ENCODE measurements at regions of chr5 and their contacts with region 1.

Region 1: DNA sequence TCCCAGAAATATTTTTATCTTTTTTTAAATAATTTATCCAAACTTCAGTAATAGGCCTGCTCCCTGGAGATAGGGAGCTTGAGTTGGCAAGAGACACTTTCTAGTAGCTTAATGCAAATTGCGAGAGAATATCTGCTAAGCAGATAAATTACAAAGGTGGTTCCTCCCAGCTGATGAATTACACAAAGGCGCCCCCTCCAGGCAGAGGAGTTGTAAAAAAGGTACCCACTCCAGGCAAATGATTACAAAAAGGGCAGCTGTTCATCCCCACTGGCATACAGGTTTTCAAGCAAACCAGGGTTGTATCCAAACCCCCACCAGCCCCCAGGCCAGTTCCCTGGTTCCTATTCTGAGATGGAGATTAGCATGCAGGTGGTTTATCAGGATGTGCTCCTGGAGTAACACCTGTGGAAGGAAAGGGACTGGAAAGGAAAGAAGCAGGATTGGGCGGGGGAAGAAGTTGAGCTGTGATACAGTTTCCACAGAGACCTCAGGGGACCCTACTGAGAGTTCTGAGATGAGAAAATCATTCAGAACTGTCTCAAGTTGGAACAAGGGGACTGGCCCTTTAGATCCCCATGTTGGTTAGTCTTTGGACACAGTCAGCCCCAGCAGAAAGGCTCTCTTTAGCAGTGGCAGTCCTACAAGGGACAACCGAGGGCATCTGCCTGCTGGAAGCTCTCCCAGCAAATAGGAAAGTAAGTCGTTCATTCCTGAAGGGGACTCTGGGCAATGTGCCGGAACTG is 25.5 kb downstream of the ESM1 start:
- DNase-seq: peak; percentile 71
- ATAC-seq: peak; percentile 79
- H3K4me3 Mint-ChIP-seq: no peak overlapping the region
- H3K27ac Mint-ChIP-seq: no peak overlapping the region
- H3K4me1 Mint-ChIP-seq: no peaks in the 10 kb centered on the region
- H3K27me3 Mint-ChIP-seq: peaks cover 15% of the 10 kb centered on the region
- CTCF ChIP-seq: peak; percentile 33

Region 2: GRCh38 chr5:54905943-54906537 is 53.8 kb before region 1 on chr5:
- CTCF ChIA-PET with region 1: interaction called, 75 read pairs
- POLR2A ChIA-PET with region 1: no interaction called
- DNase-seq: peak; percentile 79
- ATAC-seq: peak; percentile 53
- H3K4me3 Mint-ChIP-seq: no peak overlapping the region
- H3K27ac Mint-ChIP-seq: no peak overlapping the region
- H3K4me1 Mint-ChIP-seq: no peaks in the 10 kb centered on the region; the same call in none of the 2 replicates
- H3K27me3 Mint-ChIP-seq: no peaks in the 10 kb centered on the region
- CTCF ChIP-seq: peak; percentile 42; the same call in 1 of the 2 replicates

Region 3: GRCh38 chr5:54969856-54970828 is 10.3 kb after region 1 on chr5:
- CTCF ChIA-PET with region 1: interaction called, 23 read pairs
- POLR2A ChIA-PET with region 1: no interaction called
- DNase-seq: no peak
- ATAC-seq: no peak
- H3K4me3 Mint-ChIP-seq: no peak overlapping the region
- H3K27ac Mint-ChIP-seq: no peak overlapping the region
- H3K4me1 Mint-ChIP-seq: peaks cover 6% of the 10 kb centered on the region
- H3K27me3 Mint-ChIP-seq: no peaks in the 10 kb centered on the region
- CTCF ChIP-seq: no peak

Region 4: DNA sequence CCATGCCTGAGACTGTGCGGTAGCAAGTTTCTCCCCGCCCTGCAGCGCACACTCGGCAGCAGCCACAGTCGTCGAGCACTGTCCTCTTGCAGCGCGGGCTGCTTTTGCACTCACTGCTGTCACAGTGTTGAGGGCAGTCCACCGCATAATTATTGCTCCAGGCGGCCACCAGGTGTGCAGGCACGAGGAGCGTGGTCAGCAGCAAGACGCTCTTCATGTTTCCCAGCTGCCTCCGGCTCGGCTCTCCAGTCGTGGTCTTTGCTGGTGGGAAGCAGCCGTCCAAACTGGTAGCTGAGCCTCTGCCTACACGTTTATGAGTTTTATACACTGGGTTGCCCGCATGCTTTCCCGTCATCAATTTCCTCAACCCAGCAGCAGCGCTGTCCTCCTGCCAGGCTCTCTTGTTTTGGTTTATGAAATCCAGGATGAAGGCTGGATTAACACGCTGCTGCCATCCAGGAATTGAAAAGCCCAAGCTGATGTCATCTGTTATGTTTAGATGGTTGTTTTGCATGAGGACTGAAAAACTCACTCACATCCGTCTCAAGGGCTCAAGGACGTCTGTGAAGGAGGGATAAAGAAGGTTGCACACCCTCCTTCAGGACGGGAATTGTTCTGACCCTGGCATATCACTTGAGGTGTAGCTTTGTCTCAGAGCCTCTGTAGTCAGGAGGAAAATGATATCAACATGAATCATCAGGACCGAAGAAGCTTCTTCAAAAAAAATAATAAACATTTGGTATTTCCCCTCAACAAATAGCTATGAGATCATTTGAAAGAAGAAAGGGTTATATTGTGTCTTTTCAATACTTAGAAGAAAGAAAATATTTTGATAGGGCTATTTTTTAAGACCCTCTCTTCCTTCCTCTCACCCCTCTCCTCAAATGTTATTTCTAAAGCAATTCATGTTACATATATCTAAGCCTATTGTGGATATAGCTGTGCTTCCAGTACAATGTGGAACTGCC is 25.7 kb after region 1 on chr5 and contains the start of gene ESM1:
- CTCF ChIA-PET with region 1: interaction called, 17 read pairs
- POLR2A ChIA-PET with region 1: no interaction called
- DNase-seq: peak; percentile 18
- ATAC-seq: peak; percentile 62
- H3K4me3 Mint-ChIP-seq: no peak within 1 kb of the TSS
- H3K27ac Mint-ChIP-seq: no peak within 1 kb of the TSS
- H3K4me1 Mint-ChIP-seq: peaks cover 54% of the 10 kb centered on the region
- H3K27me3 Mint-ChIP-seq: peaks cover 71% of the 10 kb centered on the region
- CTCF ChIP-seq: no peak
- total RNA-seq, gene ESM1: not detected in 3 replicates

Region 5: DNA sequence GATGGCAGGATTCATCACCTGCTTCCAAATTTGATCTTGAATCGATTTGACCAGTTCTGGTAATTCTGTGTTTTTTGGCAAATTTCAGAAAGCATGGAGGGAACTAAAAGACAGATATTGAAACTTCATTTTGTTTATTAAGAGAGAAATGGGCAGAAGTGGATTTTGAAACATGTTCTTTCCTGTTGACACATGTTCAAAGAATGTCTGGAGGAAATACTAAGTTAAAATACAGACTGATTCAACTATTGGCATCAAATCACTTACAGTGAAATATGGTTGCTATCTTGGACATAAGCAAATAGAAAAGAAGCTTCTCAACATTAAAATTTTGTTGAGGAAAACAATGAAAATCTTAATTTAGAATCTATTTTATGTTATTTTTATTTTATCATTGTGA is 44.9 kb after region 1 on chr5:
- CTCF ChIA-PET with region 1: no interaction called
- POLR2A ChIA-PET with region 1: no interaction called
- DNase-seq: no peak
- ATAC-seq: no peak
- H3K4me3 Mint-ChIP-seq: no peak overlapping the region
- H3K27ac Mint-ChIP-seq: no peak overlapping the region
- H3K4me1 Mint-ChIP-seq: no peaks in the 10 kb centered on the region
- H3K27me3 Mint-ChIP-seq: peaks cover 4% of the 10 kb centered on the region; the same call in 1 of the 2 replicates
- CTCF ChIP-seq: no peak

Region 6: DNA sequence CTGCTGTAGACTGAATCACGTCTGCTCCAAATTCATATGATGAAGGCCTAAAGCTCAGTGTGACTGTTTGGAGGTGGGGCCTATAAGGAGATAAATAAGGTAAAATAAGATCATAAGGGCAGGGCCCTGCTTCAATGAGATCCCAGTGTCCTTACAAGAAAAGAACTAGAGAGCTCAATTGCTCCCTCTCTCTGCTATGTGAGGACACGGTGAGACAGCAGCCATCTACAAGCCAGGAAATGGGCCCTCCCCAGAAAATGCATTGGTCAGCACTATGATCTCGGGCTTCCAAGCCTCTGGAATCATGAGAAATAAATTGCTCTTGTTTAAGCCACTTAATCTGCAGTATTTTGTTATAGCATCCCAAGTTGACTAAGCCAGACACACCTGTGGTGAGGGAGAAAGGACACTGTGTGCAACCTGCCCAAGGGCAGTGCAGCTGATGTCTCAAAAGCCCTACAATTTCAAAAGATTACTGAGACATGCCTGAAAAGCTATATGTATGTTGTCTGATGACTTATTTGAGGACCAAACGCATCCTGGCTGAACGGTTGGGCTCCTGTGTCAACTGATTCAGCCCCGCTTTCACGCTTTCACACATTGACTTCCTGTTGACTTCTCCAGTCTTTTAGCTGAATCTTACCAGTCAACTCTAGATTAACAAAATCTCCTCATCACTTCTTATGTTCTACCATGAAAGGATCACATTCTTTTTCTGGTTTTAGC is 77.4 kb after region 1 on chr5:
- CTCF ChIA-PET with region 1: interaction called, 25 read pairs
- POLR2A ChIA-PET with region 1: no interaction called
- DNase-seq: peak; percentile 31
- ATAC-seq: peak; percentile 100
- H3K4me3 Mint-ChIP-seq: no peak overlapping the region
- H3K27ac Mint-ChIP-seq: no peak overlapping the region
- H3K4me1 Mint-ChIP-seq: peaks cover 20% of the 10 kb centered on the region
- H3K27me3 Mint-ChIP-seq: no peaks in the 10 kb centered on the region
- CTCF ChIP-seq: no peak

Region 7: DNA sequence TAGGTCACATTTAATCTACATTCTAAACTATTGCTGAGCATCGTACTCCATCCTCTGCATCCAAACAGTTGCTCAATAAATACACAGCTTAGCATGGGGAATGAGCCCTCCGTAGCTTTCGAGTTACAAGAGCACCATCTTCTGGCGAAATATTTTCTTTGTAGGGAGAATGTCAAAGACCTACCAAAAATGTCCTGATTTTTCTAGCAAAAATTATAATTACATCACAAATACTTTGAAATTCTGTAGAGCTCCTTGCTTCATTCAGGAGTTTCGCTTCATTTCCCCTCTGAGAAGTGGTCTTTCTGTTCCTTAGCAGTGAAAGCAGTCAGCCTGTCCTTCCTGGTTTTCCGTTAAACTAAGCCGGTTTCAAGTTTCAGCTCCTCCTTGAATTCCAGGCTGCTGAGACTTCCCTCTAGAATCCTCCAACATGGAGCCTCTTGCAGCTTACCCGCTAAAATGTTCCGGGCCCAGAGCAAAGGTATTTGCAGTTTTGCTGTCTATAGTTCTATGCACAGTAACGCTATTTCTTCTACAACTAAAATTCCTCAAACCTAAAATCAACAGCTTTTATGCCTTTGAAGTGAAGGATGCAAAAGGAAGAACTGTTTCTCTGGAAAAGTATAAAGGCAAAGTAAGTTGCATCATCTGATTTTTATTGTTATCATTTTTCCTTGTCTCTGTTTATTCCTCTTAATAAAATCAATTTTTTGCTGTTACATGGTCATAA is 200.1 kb after region 1 on chr5 and contains the start of gene GPX8:
- CTCF ChIA-PET with region 1: interaction called, 20 read pairs
- POLR2A ChIA-PET with region 1: no interaction called
- DNase-seq: peak; percentile 21
- ATAC-seq: peak; percentile 94
- H3K4me3 Mint-ChIP-seq: peak within 1 kb of the TSS; percentile 95
- H3K27ac Mint-ChIP-seq: peak within 1 kb of the TSS; percentile 97
- H3K4me1 Mint-ChIP-seq: peaks cover 8% of the 10 kb centered on the region
- H3K27me3 Mint-ChIP-seq: peaks cover 10% of the 10 kb centered on the region
- CTCF ChIP-seq: no peak
- total RNA-seq, gene GPX8: 30.6 to 39.2 TPM (median 33.7 TPM) in 3 replicates

Measured in WTC11 (cell line).